Colonic mucosa (tissue), 4 donors: ENCODE measurements at regions of chr5 and their contacts with region 1.

Region 1: DNA sequence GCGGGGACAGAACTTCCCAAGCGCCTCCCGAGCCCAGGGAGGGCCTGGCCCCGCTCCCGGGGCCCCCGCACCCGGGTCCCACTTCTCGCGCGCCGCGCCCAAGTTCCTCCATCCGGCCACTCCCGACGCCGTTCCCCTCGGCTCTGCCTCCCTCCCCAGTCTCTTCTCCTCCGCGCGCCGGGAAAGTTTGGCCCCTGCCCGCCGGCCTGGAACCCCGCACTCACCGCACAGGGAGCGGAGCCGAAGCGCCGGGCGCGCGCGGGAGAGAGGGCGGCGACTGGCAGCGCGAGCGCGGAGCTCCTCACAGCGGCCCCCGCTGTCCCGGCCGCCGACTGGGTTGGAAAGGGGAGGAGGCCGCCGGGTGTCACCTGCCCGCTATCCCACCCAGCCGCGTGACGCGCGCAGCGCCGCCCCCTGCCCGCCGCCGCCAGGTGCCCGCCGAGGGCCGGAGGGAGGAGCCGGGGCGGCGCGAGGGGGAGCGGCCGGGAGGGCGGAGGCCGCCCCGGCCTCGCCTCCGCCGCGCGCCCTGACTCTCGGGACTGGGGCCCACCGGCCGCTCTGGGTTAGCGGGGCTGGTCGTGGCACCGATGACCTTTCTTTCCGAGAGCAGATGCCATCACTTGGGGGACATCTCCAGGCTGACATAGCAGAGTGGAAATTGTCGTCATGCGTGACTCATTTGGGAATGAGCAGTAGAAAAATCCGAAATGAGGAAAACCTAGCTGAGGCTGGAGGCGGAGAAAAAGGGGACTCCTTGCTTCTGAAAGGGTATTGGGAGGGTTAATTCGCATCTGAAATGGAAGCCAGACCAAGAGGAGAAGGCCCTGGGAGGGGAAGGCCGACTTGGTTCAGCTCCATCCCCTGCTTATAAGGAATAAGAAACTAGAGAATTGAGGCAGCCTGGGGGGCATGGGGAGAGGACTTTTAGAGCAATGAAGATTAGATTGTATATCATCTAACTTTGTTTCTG is at the start of gene ELOVL7:
- DNase-seq: peak; percentile 90
- H3K4me3 ChIP-seq: peak within 1 kb of the TSS; percentile 85
- H3K27ac ChIP-seq: peak within 1 kb of the TSS; percentile 10
- H3K4me1 ChIP-seq: no peaks in the 10 kb centered on the region
- H3K27me3 ChIP-seq: no peaks in the 10 kb centered on the region
- CTCF ChIP-seq: no peak
- total RNA-seq, gene ELOVL7: 25.4 to 31.5 TPM

Region 2: DNA sequence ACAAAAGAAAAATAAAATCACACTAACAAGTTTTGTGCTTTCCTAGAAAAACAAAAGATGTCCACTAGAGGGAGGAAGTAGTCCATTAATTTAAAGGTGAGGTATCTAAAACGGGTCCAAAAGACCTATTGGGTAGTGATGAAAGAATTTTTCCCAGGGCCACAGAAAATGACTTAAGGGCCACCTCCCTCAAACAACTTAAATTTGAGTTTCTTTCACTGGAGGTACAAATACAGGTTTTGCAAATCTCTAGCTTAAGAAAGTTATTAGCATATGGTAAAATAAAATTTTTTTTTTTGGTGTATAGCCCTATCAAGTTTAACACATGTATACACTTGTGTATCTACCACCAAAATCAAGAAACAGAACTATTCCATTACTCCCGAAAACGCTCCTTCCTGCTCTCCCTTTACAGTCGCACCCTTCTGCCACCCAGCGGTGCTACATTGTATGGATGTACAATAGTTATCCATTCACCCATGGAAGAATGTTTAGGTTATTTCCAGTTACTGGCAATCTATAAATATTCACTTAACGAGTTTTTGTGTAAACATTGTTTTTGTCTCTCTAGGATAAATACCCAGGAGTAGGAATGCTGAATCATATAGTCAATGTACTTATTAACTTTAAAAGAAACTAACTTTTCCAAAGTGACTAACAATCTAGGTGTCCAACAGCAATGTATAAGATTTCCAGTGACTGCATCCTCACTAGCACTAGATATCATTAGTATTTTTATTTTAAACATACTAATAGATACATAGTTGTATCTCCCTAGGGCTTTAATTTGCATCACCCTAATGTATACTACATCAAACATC is 166.2 kb before region 1 on chr5:
- intact Hi-C with region 1: loop called (anchors 10 kb)
- DNase-seq: no peak
- H3K4me3 ChIP-seq: no peak overlapping the region
- H3K27ac ChIP-seq: peak overlapping the region; percentile 24
- H3K4me1 ChIP-seq: peaks cover 6% of the 10 kb centered on the region
- H3K27me3 ChIP-seq: no peaks in the 10 kb centered on the region
- CTCF ChIP-seq: peak; percentile 52

Region 3: GRCh38 chr5:61333351-61334253 is 489.4 kb after region 1 on chr5:
- intact Hi-C with region 1: no loop called
- DNase-seq: no peak
- H3K4me3 ChIP-seq: peak overlapping the region; percentile 78
- H3K27ac ChIP-seq: peak overlapping the region; percentile 83
- H3K4me1 ChIP-seq: no peaks in the 10 kb centered on the region
- H3K27me3 ChIP-seq: no peaks in the 10 kb centered on the region
- CTCF ChIP-seq: no peak